Psoas muscle (tissue), 8 donors: ENCODE measurements at regions of chr2 and their contacts with region 1.

Region 1: GRCh38 chr2:67571785-67572718 is 174.9 kb downstream of the ETAA1 start:
- DNase-seq: no peak
- ATAC-seq: peak in 1 of 4 donors; percentile 59
- H3K4me3 ChIP-seq: no peak overlapping the region
- H3K27ac ChIP-seq: no peak overlapping the region
- H3K4me1 ChIP-seq: peaks cover 8% of the 10 kb centered on the region
- H3K27me3 ChIP-seq: no peaks in the 10 kb centered on the region
- CTCF ChIP-seq: no peak

Region 2: GRCh38 chr2:66729416-66730300 is 842.4 kb before region 1 on chr2:
- intact Hi-C with region 1: loop called in 1 of 2 experiments (anchors 10 kb)
- DNase-seq: no peak
- ATAC-seq: no peak
- H3K4me3 ChIP-seq: no peak overlapping the region
- H3K27ac ChIP-seq: no peak overlapping the region
- H3K4me1 ChIP-seq: peaks cover 7% of the 10 kb centered on the region
- H3K27me3 ChIP-seq: peaks cover 0 to 5% (median 0%) of the 10 kb centered on the region in 3 donors
- CTCF ChIP-seq: no peak